Endothelial cell of umbilical vein (primary cell): ENCODE measurements at regions of chr11 and their contacts with region 1.

Region 1: DNA sequence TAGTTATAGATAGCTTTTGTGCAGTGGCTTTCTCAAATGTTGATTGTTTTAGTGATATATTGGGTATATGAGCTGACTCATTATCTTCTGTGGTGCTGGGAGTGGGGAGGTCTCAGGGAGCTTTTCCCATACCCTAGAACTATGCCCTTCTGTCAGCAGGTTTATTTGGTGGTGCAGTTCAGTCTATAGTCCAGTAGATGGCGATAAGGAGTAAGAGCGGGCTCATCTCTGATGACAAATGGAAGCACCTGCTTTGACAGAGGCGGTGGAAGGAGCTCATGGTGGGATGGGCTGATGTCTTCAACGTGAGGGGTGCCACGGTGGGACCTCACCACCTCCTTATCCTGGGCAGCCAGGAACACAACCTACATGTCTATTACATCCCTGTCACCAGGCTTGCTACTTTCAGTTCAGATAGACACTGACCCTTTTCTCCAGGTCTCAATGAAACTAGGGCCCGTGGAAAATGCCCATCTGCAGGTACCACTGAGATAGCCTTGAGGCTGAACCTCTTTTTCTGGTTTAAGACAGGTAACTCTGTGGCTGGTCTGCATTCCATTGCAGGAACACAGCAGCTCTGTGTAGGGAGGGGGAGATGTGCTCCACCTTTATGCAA is 13.0 kb upstream of the OR6A2 start:
- DNase-seq: peak; percentile 48
- H3K4me3 ChIP-seq: no peak overlapping the region
- H3K27ac ChIP-seq: no peak overlapping the region
- H3K4me1 ChIP-seq: no peaks in the 10 kb centered on the region
- H3K27me3 ChIP-seq: no peaks in the 10 kb centered on the region
- CTCF ChIP-seq: peak; percentile 83 to 88
- POLR2A ChIP-seq: no peak

Region 2: GRCh38 chr11:6757373-6757967 is 55.0 kb before region 1 on chr11:
- CTCF ChIA-PET with region 1: interaction called, 11 read pairs
- POLR2A ChIA-PET with region 1: no interaction called
- dilution Hi-C with region 1: no loop called
- intact Hi-C with region 1: no loop called
- DNase-seq: peak; percentile 73
- H3K4me3 ChIP-seq: no peak overlapping the region
- H3K27ac ChIP-seq: no peak overlapping the region
- H3K4me1 ChIP-seq: no peaks in the 10 kb centered on the region
- H3K27me3 ChIP-seq: peaks cover 2 to 8% of the 10 kb centered on the region in 2 experiments
- CTCF ChIP-seq: peak; percentile 58 to 62
- POLR2A ChIP-seq: no peak

Region 3: DNA sequence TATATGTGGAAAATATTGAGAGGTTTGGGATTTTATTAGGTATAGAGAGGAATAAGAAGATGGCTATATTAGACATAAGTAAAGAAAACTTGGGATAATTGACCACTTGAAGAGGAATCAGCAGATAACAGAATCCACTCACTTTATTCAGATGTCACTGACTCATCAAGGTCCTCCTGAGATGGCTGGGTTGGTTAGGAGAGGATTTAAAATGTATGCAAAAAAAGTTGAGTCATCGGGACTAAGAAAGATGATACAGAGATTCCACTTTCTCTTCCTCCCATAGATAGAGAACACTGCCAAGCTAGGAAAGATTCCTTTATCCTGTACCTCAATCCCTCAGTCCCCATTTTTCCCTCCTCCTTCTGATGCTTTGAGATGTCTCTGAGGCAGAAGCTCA is 13.1 kb before region 1 on chr11 and contains the start of gene OR6A2:
- CTCF ChIA-PET with region 1: interaction called, 14 read pairs
- POLR2A ChIA-PET with region 1: no interaction called
- dilution Hi-C with region 1: no loop called
- intact Hi-C with region 1: no loop called
- DNase-seq: no peak
- H3K4me3 ChIP-seq: no peak within 1 kb of the TSS
- H3K27ac ChIP-seq: no peak within 1 kb of the TSS
- H3K4me1 ChIP-seq: no peaks in the 10 kb centered on the region
- H3K27me3 ChIP-seq: peaks cover under 1 to 8% of the 10 kb centered on the region in 2 experiments
- CTCF ChIP-seq: no peak
- POLR2A ChIP-seq: no peak
- total RNA-seq, gene OR6A2: 0.27 and 0.46 TPM in 2 replicates

Region 4: DNA sequence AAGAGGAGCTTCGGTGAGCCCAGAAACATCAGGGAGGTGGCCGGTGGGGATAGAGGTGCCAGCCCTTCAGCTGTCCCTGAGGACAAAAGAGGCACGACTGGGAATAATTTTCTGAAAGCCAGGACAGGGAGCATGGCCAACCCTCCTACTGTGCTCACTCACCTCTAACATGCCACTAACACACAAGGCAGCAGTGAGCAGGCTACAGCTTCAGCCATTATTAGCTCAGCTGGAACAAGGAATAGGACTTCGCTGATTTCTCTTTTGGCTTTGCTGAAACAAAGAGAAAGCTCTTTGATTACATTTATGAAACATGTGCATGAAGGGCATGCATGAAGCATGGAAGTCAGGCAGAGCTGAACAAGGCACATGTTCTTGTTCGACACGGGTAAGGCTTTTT is 20.9 kb after region 1 on chr11:
- CTCF ChIA-PET with region 1: interaction called, 10 read pairs
- POLR2A ChIA-PET with region 1: no interaction called
- dilution Hi-C with region 1: no loop called
- intact Hi-C with region 1: no loop called
- DNase-seq: no peak
- H3K4me3 ChIP-seq: no peak overlapping the region
- H3K27ac ChIP-seq: no peak overlapping the region
- H3K4me1 ChIP-seq: no peaks in the 10 kb centered on the region
- H3K27me3 ChIP-seq: no peaks in the 10 kb centered on the region
- CTCF ChIP-seq: no peak
- POLR2A ChIP-seq: no peak

Region 5: GRCh38 chr11:7020183-7020917 is 207.9 kb after region 1 on chr11 and contains the starts of genes NLRP14 and ZNF214:
- CTCF ChIA-PET with region 1: interaction called, 11 read pairs
- POLR2A ChIA-PET with region 1: no interaction called
- dilution Hi-C with region 1: no loop called
- intact Hi-C with region 1: no loop called
- DNase-seq: peak; percentile 92
- H3K4me3 ChIP-seq: peak within 1 kb of the TSS; percentile 56 to 88 (median 85)
- H3K27ac ChIP-seq: peak within 1 kb of the TSS; percentile 19
- H3K4me1 ChIP-seq: peaks cover 11% of the 10 kb centered on the region
- H3K27me3 ChIP-seq: no peaks in the 10 kb centered on the region
- CTCF ChIP-seq: no peak
- POLR2A ChIP-seq: peak; percentile 31
- total RNA-seq, gene NLRP14: 0.24 and 0.35 TPM in 2 replicates
- total RNA-seq, gene ZNF214: 1.7 and 2.5 TPM in 2 replicates

Region 6: DNA sequence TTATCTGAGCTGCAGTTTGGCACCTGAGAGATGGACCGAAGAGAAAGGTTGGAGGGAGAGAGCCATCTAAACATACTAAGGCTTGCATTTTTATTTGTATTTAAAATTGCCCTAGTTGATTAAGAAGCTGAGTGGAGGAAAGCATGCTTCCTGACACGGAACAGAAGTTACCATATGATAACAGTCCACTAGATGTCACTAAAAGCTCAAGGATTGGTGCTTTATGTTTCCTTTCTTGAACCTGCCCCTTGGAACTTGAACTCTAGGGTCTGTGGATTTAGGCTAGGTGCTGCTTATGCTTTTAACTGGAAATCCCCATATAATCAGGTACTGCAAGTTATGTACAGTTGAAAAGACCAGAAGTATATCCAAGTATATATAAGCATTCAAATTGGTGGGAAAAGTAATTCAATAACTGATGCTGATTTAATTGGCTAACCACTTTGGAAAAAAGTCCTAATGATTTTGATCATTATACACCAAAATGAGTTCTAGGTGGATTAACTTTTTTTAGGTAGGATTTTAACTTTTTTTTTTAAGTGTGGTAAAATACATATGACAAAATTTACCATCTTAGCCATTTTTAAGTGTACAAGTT is 285.8 kb after region 1 on chr11:
- CTCF ChIA-PET with region 1: interaction called, 12 read pairs
- POLR2A ChIA-PET with region 1: no interaction called
- dilution Hi-C with region 1: no loop called
- intact Hi-C with region 1: loop called (anchors 2 kb)
- DNase-seq: peak; percentile 67
- H3K4me3 ChIP-seq: no peak overlapping the region
- H3K27ac ChIP-seq: no peak overlapping the region
- H3K4me1 ChIP-seq: no peaks in the 10 kb centered on the region
- H3K27me3 ChIP-seq: peaks cover 0 to 11% of the 10 kb centered on the region in 2 experiments
- CTCF ChIP-seq: peak; percentile 37 to 51
- POLR2A ChIP-seq: no peak

Region 7: DNA sequence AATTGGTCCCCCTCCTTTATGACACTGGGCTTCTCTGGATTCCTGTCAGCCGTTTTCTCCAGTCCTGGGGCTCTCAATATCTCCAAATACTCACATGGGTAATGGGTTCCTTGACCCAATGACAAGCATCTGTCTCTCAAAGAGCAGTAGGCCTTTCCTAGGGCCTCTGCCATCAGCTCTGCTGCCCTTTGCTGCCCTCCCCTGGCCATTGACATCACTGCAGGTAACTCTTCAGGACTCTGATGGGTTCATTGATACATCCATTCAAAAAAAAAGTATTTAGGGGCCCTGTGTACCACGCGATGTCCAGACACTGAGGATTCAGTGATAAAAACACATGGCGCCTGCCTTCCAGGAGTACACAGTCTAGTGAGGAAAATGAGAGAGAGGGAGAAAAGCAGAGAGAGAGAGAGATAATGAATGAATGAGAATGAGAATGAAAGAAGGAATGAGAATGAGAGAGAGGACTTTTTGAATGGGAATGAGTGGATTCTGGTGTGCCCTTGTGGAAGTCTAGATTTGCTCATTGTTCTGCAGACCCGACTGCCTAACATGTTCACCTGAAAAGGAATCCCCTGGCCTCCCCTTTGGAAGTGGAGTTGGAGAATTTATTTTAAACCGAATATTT is 630.2 kb after region 1 on chr11:
- CTCF ChIA-PET with region 1: interaction called, 25 read pairs
- POLR2A ChIA-PET with region 1: no interaction called
- dilution Hi-C with region 1: no loop called
- intact Hi-C with region 1: loop called (anchors 1 kb)
- DNase-seq: peak; percentile 63
- H3K4me3 ChIP-seq: no peak overlapping the region
- H3K27ac ChIP-seq: no peak overlapping the region
- H3K4me1 ChIP-seq: no peaks in the 10 kb centered on the region
- H3K27me3 ChIP-seq: peaks cover 2 to 11% of the 10 kb centered on the region in 2 experiments
- CTCF ChIP-seq: peak; percentile 78 to 80
- POLR2A ChIP-seq: no peak